ENCODE measurements at regions of chr14 and their contacts with region 1.

Region 1: GRCh38 chr14:37246427-37246914 is 48.7 kb downstream of the MIPOL1 start:
- DNase-seq: no peak
- H3K4me3 ChIP-seq: no peak overlapping the region
- H3K27ac ChIP-seq: no peak overlapping the region
- H3K4me1 ChIP-seq: no peaks in the 10 kb centered on the region
- H3K27me3 ChIP-seq: no peaks in the 10 kb centered on the region
- CTCF ChIP-seq: peak; percentile 32 to 78 (median 74)
- POLR2A ChIP-seq: no peak

Region 2: GRCh38 chr14:37594238-37594914 is 347.9 kb after region 1 on chr14:
- intact Hi-C with region 1: loop called (anchors 10 kb)
- DNase-seq: peak; percentile 52 to 79
- H3K4me3 ChIP-seq: peak overlapping the region in 1 of 3 donors; percentile 19
- H3K27ac ChIP-seq: no peak overlapping the region
- H3K4me1 ChIP-seq: peaks cover 30 to 42% of the 10 kb centered on the region in 2 donors
- H3K27me3 ChIP-seq: peaks cover 82% of the 10 kb centered on the region
- CTCF ChIP-seq: peak; percentile 33 to 71 (median 52)
- POLR2A ChIP-seq: no peak

Region 3: GRCh38 chr14:37874429-37875191 is 628.1 kb after region 1 on chr14:
- intact Hi-C with region 1: loop called (anchors 10 kb)
- DNase-seq: peak; percentile 75 to 85
- H3K4me3 ChIP-seq: no peak overlapping the region
- H3K27ac ChIP-seq: no peak overlapping the region
- H3K4me1 ChIP-seq: peaks cover 0 to 4% of the 10 kb centered on the region in 2 donors
- H3K27me3 ChIP-seq: no peaks in the 10 kb centered on the region
- CTCF ChIP-seq: peak; percentile 50 to 92 (median 76)
- POLR2A ChIP-seq: no peak